GM10248 (cell line): ENCODE measurements at regions of chr13 and their contacts with region 1.

Region 1: DNA sequence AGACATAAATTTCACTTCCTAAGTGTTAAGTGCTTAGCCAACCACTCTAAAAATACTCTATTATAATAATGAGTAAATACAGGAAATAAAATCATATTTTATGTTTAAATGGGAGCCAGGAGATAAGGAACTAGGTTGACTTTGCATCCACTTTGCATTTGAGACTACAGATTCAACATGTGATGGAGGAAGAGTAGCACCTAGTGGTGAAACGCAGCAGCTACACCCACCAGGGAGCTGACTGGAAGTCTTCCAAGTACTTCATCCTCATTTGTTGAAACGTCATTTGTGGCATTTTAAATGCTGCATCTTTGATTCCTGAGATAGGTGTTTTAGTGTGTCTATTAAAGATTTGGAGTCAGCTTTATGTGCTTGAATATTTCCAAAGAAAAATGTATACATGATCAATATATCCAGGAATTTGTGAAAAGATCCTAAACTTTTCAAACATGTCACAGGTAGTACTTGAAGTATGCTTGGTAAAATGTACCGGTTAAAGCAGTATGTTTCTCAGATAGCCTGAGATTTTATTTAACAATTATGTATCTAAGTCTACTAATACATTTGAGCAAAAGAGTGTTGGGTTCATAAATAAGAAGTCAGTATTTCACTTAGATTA is 17.4 kb upstream of the KCTD12 start:
- DNase-seq: peak; percentile 61
- CTCF ChIP-seq: peak; percentile 98

Region 2: DNA sequence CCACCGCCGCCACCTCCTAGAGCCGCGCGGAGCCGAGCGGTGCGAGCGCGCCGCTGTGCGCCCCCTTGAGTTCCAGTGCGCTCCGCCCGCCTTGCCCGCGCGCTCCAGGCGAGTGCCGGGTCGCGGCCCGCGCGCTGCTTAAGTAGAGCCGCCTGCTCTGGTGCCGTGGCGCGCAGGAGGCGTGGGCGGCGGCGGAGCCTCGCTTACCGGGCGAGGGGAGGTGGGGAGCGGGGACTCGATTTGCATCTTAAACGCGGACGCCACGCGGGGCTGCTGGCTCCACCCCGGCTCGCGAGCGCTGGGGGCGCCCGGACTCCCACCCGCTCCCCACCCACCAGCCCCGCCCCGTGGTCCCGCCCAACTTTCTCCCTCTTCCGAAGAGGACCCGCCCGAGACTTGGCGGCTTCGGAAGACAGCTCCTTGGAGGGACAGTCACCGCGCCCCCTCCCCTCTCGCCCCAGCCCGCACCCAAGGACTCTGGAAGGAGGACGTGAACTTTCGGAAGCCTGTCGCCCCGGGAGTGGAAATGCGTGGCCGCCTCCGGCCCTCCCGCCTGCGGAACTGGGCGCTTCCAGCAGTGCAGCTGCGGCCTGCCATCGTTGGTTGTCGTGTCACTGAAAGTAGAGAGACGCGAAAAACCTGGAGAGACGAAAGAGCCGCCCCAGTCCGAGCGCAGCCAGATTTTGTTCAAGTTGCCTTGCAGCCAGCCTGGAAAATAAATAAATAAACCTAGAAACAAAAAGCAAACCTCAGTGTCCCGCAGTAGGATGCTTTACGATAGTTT is 17.2 kb before region 1 on chr13 and contains the start of gene KCTD12:
- CTCF ChIA-PET with region 1: interaction called, 12 read pairs
- POLR2A ChIA-PET with region 1: no interaction called
- DNase-seq: peak; percentile 83
- CTCF ChIP-seq: peak; percentile 60